MCF 10A (cell line): ENCODE measurements at regions of chr7 and their contacts with region 1.

Region 1: DNA sequence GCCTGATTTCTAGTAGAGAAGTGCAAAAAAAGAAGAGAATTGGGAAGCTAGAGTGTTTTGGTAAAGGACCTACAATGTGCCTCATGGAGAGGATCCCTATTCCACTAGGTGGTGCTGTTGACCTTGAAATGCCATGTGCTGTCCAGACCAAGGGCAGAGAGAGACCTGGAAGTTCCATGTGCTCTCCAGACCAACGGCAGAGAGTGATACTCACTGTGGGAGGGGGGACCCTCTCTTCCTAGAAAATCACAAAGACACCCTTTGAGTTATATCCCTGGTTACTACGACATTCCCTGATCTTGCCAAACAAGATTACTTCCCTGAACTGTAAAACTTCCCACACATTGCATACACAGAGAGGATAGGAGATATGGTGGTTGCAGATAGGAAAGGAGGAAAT is 212.7 kb upstream of the ZNF804B start:
- DNase-seq: peak; percentile 63
- H3K4me3 Mint-ChIP-seq: no peak overlapping the region
- H3K27ac Mint-ChIP-seq: no peak overlapping the region
- H3K4me1 Mint-ChIP-seq: no peaks in the 10 kb centered on the region
- H3K27me3 Mint-ChIP-seq: no peaks in the 10 kb centered on the region
- CTCF ChIP-seq: peak; percentile 65

Region 2: DNA sequence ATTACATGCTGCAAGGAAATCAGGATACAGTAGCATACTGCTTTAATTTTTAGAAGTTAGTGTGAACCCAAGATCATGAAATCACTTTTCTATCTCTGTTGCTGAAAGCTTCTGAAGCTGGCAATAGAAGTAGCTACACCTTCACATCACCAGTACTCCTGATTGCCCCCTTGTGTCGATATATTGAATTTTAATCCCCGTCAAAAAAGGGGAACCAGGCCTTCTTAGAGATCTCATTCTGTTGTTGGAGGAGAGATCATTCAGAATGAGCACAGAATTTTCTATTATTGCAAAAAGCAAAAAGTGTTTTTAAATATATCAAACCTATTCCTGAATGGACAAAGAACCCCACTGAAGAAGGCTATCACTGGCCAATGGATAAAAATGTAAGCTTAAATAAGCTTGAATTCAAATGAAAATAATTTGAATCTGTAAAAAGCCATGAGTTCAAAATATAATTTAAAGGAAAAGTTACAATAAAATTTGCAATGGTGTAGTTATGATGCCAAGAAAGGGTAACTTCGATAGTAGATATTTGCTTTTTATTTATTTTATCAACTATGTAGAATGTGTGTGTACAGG is 288.4 kb after region 1 on chr7:
- CTCF ChIA-PET with region 1: no interaction called
- POLR2A ChIA-PET with region 1: no interaction called
- intact Hi-C with region 1: loop called (anchors 1 kb)
- DNase-seq: peak; percentile 51
- H3K4me3 Mint-ChIP-seq: no peak overlapping the region
- H3K27ac Mint-ChIP-seq: no peak overlapping the region
- H3K4me1 Mint-ChIP-seq: no peaks in the 10 kb centered on the region
- H3K27me3 Mint-ChIP-seq: peaks cover 27% of the 10 kb centered on the region
- CTCF ChIP-seq: peak; percentile 36

Region 3: DNA sequence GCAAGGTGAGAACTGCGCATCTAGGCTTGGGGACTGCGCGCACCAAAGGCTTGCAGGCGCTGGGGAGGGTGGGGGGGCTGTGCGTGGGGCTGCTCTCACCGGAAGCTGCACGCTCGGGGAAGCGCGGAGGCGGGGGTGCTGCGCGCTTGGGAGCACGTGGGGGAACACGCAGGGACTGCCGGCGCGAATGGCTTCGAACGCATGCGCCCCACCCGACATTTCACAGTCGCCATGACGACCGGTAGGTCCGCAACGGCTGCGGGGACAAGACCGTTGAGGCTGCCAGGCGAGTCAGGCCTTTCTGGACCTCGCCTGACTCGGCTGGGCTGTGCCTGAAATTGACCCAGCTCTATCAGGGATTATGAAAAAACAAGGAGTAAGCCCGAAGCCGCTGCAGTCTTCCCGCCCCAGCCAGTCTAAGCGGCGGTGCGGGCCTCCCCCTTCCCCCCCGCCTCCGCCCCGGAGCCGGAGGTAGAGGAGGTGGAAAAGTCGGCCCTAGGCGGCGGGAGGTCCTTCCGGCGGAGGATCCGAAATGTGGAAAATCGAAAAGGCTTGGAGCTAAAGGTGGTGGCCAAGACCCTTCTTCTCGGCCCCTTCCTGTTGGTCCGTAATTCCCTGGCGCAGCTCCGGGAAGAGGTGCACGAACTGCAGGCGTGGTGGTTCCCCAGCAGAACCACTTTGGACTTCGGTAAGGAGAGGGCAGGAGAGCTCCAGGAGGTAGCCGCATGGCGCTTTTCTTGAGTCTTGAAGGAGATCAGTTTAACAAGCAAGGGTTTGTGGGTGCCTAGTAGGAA is 1572.6 kb after region 1 on chr7:
- CTCF ChIA-PET with region 1: no interaction called
- POLR2A ChIA-PET with region 1: no interaction called
- intact Hi-C with region 1: loop called (anchors 10 kb)
- DNase-seq: no peak
- H3K4me3 Mint-ChIP-seq: peak overlapping the region; percentile 36
- H3K27ac Mint-ChIP-seq: no peak overlapping the region
- H3K4me1 Mint-ChIP-seq: peaks cover 6% of the 10 kb centered on the region
- H3K27me3 Mint-ChIP-seq: peaks cover 45% of the 10 kb centered on the region
- CTCF ChIP-seq: no peak